Posterior vena cava (tissue), 2 donors: ENCODE measurements at regions of chr11 and their contacts with region 1.

Region 1: DNA sequence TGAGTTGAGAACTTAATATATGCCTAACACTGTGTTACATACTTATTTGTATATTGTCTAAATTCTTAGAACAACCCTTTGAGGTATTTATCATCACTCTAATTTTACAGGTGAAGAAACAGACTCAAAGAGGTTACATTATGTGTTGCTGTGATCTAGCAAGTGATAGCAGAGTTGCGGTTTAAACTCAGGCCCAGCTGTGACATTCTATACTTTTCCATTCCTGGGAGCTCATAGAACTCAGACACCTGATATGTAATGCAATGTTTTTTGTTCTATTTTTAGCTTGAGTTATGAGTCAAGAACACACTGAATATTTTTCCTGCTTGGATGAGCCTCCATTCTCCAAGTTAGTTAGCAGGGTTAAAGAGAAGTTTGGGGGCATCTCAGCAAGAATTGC is 449.7 kb upstream of the DDI1 start:
- DNase-seq: no peak

Region 2: GRCh38 chr11:103322821-103323220 is 263.9 kb before region 1 on chr11:
- intact Hi-C with region 1: loop called in 1 of 2 experiments (anchors 5 kb)
- DNase-seq: no peak

Region 3: DNA sequence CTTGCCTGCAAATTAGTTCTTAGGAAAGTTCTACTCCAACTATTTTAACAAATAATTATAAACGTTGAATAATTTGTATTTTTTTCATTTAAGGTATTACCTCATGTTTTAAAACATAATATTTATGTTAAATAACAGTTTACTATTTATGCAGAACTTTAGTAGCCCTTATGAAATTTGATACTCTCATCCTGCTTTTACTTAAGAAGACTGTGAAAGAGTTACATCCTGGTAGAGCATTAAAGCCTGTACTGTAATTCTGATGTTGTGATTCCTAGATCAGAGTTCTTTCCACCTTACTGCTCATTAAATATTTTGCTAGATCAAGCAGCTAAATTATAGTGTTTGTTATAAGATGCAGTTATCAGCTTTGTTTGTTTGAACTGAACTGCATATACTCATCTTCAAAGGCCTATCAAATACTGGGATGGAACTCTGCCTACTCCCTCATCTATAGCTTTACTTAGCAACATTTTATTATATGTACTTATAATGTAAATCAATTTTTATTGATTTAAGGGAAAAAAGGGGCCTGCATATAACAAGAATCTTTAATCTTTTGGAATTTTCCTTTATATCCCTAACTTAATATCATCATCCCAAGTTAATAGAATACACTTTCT is 173.4 kb before region 1 on chr11:
- intact Hi-C with region 1: loop called in 1 of 2 experiments (anchors 2 kb)
- DNase-seq: no peak

Region 4: DNA sequence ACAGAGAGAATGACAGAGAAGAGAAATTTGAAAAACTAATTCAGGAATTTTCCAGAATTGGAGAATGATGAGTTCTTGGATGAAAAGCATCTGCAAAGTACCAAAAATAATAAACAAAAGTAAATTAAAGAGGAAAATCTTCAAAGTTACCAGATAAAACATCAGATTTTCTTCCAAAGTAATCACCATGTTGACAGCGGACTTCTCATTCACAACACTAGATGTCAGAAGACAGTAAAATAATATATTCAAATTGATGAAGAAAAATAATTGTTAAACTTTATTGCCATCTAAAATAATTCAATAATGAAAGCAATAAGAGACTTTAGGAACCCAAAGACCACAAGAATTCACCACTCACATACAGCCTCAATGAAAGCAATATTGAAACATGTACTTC is 122.3 kb before region 1 on chr11:
- intact Hi-C with region 1: no loop called
- DNase-seq: no peak

Region 5: GRCh38 chr11:103730131-103730940 is 143.6 kb after region 1 on chr11:
- intact Hi-C with region 1: no loop called
- DNase-seq: no peak

Region 6: DNA sequence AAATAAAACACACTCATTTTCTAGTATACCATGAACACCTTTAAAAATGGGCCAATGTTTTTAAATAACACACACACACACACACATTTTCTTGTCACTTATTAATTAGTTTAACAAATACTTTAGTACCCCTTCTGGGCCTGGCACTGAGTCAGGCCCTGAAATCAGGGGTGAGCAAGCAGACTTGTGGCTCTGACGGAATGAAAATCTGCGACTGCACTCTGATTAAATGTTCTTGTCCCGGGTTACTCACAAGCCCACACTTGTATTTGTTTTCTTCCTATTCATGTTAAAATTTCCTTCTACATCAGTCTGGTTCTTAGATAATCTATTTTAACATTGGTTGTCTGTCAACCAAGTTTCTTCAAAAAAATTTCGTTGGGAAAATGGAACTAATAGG is 620.2 kb after region 1 on chr11:
- intact Hi-C with region 1: no loop called
- DNase-seq: no peak